Right ventricle myocardium superior (tissue), 1 donor: ENCODE measurements at regions of chr11 and their contacts with region 1.

Region 1: GRCh38 chr11:36564376-36565030 is 3.3 kb upstream of the RAG1 start:
- DNase-seq: no peak
- ATAC-seq: peak; percentile 91

Region 2: DNA sequence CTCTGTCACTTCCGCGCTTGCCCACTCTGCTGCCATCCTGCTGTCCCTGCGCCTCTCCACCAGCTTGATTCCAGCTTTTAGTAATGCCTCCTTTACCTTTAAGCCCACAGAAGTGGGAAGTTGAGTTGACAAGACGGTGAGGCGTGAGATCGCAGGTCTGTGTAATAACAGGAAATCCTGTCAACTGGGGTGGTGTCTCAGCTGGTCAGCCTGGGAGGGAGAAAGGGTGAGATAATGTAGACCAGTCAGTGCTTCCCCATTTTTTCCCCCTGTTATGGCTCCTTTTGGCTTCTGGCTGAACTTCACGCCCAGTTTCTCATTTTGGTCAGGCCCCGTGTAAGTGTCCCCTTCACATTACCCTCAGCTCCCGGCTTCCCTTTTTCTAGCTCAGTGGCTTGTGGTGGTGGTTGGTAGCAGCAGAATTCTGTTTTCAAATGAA is 153.3 kb before region 1 on chr11:
- intact Hi-C with region 1: no loop called
- DNase-seq: peak; percentile 60
- ATAC-seq: peak; percentile 60

Region 3: DNA sequence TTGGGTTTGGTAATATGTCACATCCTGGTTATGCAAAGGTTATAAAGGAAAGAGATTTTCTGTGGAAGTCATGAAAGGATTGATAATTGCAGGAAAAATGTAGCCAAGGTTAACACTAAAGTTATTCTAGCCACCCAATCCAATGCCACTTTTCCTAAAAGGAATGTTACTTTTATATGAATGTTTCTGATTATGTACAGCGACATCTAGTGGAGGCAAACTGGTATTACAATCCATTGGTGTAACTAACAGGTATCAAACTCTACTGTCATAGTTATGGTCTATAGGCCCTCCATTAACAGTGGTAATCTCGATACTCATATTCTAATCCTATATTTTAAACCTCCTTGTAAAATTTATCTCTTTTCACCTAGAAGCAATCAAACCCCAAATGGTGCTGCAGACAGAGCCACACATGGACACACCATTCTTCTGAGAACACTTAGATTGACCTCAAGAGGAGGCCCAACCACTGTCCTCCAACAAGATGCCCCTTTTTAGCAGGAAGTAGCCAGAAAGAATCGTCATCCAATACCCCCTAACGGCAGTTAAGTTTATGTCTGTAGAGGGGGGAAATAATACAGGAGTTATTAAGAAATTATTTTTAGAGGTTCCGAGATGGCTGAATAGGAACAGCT is 108.4 kb after region 1 on chr11:
- intact Hi-C with region 1: loop called (anchors 5 kb)
- DNase-seq: no peak
- ATAC-seq: peak; percentile 49

Region 4: GRCh38 chr11:36746886-36747710 is 182.6 kb after region 1 on chr11:
- intact Hi-C with region 1: loop called (anchors 5 kb)
- DNase-seq: peak; percentile 88
- ATAC-seq: peak; percentile 98

Region 5: DNA sequence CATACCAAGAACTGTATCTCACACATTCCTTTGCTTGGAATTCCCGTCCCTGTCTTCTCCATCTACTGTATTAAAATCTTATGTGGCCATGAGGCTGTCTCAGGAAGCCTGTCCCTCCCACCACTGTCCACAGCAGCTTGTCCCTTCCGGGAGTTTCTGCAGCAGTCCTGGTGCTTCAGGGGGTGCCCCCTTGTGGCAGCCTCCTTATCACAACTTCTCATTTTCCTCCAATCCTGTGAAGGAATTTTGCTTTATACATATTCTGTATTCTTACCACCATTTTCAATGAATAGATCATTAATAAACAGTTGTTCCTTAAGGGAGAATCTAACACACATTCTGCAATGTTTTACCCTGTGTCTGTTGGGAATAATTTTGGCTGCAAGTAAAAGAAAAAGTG is 253.9 kb after region 1 on chr11:
- intact Hi-C with region 1: no loop called
- DNase-seq: no peak
- ATAC-seq: no peak

Region 6: GRCh38 chr11:36878737-36879136 is 314.2 kb after region 1 on chr11:
- intact Hi-C with region 1: no loop called
- DNase-seq: no peak
- ATAC-seq: no peak